Mammary epithelial cell (primary cell): ENCODE measurements at regions of chr16 and their contacts with region 1.

Region 1: DNA sequence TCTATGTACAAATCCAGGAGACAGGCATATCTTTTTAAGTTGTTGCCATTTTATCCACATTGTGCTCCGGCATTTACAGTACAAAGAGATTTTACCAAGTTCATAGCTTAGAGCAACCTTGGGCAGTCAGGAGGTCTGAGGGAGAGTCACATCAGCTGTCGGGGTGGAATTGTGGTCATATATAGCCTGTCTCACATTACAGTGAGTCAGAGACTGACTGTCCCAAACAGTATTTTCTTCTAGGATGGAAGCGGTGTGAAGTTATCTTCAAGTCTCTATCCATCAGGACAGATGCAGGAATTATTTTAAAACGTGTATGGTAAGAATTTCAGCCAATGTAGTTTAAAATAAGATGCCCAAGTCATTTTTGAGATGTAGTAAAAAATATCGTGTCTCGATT is 53.0 kb downstream of the GPRC5B start:
- DNase-seq: peak; percentile 70
- H3K4me3 ChIP-seq: no peak overlapping the region
- H3K27ac ChIP-seq: no peak overlapping the region
- H3K4me1 ChIP-seq: peaks cover 2% of the 10 kb centered on the region
- H3K27me3 ChIP-seq: no peaks in the 10 kb centered on the region
- CTCF ChIP-seq: no peak

Region 2: DNA sequence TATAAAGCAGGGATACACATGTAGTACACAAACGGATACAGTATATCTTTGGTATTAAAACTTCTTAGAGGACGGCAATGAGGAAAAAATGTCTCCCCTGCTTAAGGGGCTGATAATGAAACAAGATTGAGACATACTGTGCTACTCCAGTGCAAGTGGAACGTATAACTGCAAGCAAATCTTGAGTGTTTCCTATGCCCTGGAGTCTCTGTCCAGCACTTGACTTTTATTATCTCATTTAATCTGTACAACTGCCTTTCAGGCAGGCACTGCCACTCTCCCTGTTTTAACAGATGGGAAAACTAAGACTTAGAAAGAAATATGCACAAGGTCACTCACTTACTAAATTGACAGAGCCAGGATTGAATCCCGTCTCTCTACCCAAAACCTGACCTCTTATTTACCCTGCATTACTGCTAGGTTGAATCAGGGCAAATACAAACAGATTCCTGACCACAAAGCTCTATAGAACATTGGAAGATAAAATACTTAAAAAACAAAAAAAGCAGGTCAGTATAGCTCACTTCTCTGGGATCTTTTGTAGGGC is 385.3 kb before region 1 on chr16:
- CTCF ChIA-PET with region 1: no interaction called
- dilution Hi-C with region 1: no loop called
- in situ Hi-C with region 1: no loop called
- intact Hi-C with region 1: no loop called
- DNase-seq: no peak
- H3K4me3 ChIP-seq: no peak overlapping the region
- H3K27ac ChIP-seq: no peak overlapping the region
- H3K4me1 ChIP-seq: no peaks in the 10 kb centered on the region
- H3K27me3 ChIP-seq: no peaks in the 10 kb centered on the region
- CTCF ChIP-seq: no peak

Region 3: DNA sequence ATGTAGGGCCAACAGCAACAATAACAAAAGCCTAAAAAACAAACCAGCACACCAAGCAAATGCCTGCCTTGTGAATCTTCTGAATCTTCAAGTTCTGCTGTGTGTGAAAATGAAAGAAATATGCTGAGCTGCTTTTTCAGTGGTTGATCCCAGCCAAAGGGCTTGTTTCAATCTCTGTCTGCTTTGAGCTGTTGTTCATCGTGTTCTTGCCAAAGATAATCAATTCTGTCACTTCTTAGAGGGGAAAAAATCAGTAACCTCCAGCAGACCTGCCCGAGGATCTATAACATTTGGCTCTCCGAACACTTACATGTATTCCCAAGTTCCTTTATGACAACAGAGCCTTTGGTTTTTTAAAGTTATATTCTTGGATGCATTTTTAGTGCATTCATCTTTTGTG is 210.2 kb before region 1 on chr16:
- CTCF ChIA-PET with region 1: no interaction called
- dilution Hi-C with region 1: no loop called
- in situ Hi-C with region 1: no loop called
- intact Hi-C with region 1: no loop called
- DNase-seq: no peak
- H3K4me3 ChIP-seq: no peak overlapping the region
- H3K27ac ChIP-seq: no peak overlapping the region
- H3K4me1 ChIP-seq: no peaks in the 10 kb centered on the region
- H3K27me3 ChIP-seq: no peaks in the 10 kb centered on the region
- CTCF ChIP-seq: no peak

Region 4: DNA sequence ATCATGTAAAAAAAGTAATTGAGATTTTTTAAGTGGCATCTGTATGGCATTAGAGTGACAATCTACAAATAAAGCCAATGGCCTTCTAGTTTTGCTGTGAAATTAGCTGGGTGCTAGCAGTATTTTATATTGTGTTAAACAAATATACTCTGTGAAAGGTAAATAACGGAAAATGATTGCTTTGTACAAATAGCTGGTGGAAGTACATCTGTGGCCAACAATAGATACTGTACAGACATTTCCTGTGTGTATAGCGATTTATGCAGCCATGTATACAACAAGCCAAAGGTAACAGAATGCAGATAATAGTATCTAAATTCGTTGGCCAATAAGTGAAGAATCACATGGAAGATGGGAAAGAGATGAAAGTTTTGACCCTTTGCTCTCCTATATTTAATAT is 87.0 kb before region 1 on chr16:
- CTCF ChIA-PET with region 1: no interaction called
- dilution Hi-C with region 1: loop called (anchors 5 kb)
- in situ Hi-C with region 1: no loop called
- intact Hi-C with region 1: no loop called
- DNase-seq: no peak
- H3K4me3 ChIP-seq: no peak overlapping the region
- H3K27ac ChIP-seq: no peak overlapping the region
- H3K4me1 ChIP-seq: peaks cover 3% of the 10 kb centered on the region
- H3K27me3 ChIP-seq: no peaks in the 10 kb centered on the region
- CTCF ChIP-seq: no peak

Region 5: GRCh38 chr16:19844945-19845641 is 13.4 kb after region 1 on chr16:
- CTCF ChIA-PET with region 1: no interaction called
- dilution Hi-C with region 1: no loop called
- in situ Hi-C with region 1: no loop called
- intact Hi-C with region 1: no loop called
- DNase-seq: no peak
- H3K4me3 ChIP-seq: no peak overlapping the region
- H3K27ac ChIP-seq: no peak overlapping the region
- H3K4me1 ChIP-seq: no peaks in the 10 kb centered on the region
- H3K27me3 ChIP-seq: no peaks in the 10 kb centered on the region
- CTCF ChIP-seq: no peak